Activated T-helper 1 cell treated with anti-CD3 and anti-CD28 coated beads, Interleukin-12 subunit alpha, Interleukin-12 subunit beta, Interleukin-2, Interleukin-4 antibody, amounts not matched to agents 30 ng/mL and 10 ng/mL and 1 ng/mL, durations not matched to agents 14 hours and 24 hours and 36 hours (primary cell): ENCODE measurements at regions of chr4 and their contacts with region 1.

Region 1: DNA sequence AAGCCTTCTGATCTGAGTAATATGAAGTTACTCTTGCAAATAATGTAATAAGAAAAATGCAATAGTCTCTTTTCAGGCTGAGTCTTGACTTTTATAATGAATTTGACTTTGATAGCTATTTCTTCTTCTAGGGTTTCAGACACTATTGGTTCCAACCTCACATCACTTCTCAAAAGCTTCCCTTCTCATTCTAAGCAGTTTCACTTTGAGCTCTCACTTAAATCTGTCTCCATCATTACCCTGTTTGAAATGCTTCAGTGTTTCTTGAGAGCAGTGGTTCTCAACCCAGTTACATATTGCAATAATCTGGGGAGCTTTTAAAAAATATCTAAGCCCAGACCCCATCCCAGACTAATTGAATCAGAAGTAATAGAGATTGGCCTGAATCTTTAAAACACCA is 40.5 kb upstream of the BMP2K start:
- DNase-seq: no peak
- H3K4me3 Mint-ChIP-seq: no peak overlapping the region
- H3K27ac Mint-ChIP-seq: no peak overlapping the region
- H3K4me1 Mint-ChIP-seq: peaks cover 5% of the 10 kb centered on the region
- H3K27me3 Mint-ChIP-seq: no peaks in the 10 kb centered on the region

Region 2: GRCh38 chr4:78693777-78694456 is 41.8 kb before region 1 on chr4:
- intact Hi-C with region 1: loop called (anchors 1 kb)
- DNase-seq: no peak
- H3K4me3 Mint-ChIP-seq: no peak overlapping the region
- H3K27ac Mint-ChIP-seq: no peak overlapping the region
- H3K4me1 Mint-ChIP-seq: peaks cover 17% of the 10 kb centered on the region
- H3K27me3 Mint-ChIP-seq: no peaks in the 10 kb centered on the region

Region 3: DNA sequence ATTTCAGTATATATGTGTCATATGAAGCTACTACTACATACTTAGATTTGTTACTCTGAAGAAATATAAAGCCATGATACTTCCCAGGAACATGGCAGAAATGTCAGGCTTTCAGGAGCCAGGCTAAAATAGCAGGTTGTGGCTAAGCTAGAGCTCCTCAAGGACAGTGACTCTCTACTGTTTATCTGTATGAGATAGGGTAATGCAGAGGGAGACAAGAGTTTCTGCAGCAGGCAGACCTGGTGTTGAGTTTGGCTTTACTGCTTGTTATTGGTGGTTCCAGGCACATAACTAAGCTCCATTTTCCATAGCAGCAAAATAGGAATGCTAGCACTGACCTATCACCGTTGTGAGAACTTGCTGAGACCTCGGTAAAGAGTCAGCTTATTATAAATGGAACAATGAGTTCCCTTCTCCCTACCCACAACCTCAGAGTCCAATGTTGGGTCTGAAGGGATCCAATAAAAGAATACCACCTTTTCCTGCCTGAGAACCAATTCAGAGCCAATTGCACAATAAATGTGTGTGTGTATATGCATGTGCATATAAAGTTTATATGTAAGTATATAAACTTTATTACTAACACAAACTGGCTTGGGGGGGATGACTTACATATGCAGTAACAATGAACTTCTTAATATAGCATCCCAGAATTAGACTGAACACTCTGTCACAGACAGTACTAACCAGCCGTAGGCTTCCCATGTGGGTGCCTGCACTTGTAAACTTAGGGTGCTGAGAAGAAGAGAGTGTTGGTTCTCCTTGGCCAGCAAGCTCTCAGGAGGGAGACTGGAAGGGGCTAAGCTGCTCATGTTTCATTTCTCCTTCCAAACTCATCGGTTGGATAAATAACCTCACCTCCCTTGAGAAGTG is 255.5 kb after region 1 on chr4:
- intact Hi-C with region 1: no loop called
- DNase-seq: no peak
- H3K4me3 Mint-ChIP-seq: no peak overlapping the region
- H3K27ac Mint-ChIP-seq: no peak overlapping the region
- H3K4me1 Mint-ChIP-seq: no peaks in the 10 kb centered on the region
- H3K27me3 Mint-ChIP-seq: peaks cover 2% of the 10 kb centered on the region